ENCODE measurements at regions of chr17 and their contacts with region 1.

Region 1: GRCh38 chr17:65556014-65556909 is 5.2 kb downstream of the AXIN2 start:
- DNase-seq: peak; percentile 91
- H3K4me3 Mint-ChIP-seq: no peak overlapping the region
- H3K27ac Mint-ChIP-seq: no peak overlapping the region
- H3K4me1 Mint-ChIP-seq: peaks cover 27% of the 10 kb centered on the region
- H3K27me3 Mint-ChIP-seq: no peaks in the 10 kb centered on the region

Region 2: GRCh38 chr17:65294179-65294720 is 262.0 kb before region 1 on chr17:
- CTCF ChIA-PET with region 1: interaction called, 31 read pairs
- POLR2A ChIA-PET with region 1: no interaction called
- intact Hi-C with region 1: loop called (anchors 2 kb)
- DNase-seq: peak; percentile 71
- H3K4me3 Mint-ChIP-seq: no peak overlapping the region
- H3K27ac Mint-ChIP-seq: no peak overlapping the region
- H3K4me1 Mint-ChIP-seq: no peaks in the 10 kb centered on the region
- H3K27me3 Mint-ChIP-seq: no peaks in the 10 kb centered on the region

Region 3: GRCh38 chr17:65523853-65524664 is 32.2 kb before region 1 on chr17:
- CTCF ChIA-PET with region 1: interaction called, 9 read pairs
- POLR2A ChIA-PET with region 1: interaction called, 3 read pairs
- intact Hi-C with region 1: loop called (anchors 1 kb)
- DNase-seq: peak; percentile 10
- H3K4me3 Mint-ChIP-seq: no peak overlapping the region
- H3K27ac Mint-ChIP-seq: peak overlapping the region; percentile 57
- H3K4me1 Mint-ChIP-seq: peaks cover 24% of the 10 kb centered on the region
- H3K27me3 Mint-ChIP-seq: no peaks in the 10 kb centered on the region

Region 4: DNA sequence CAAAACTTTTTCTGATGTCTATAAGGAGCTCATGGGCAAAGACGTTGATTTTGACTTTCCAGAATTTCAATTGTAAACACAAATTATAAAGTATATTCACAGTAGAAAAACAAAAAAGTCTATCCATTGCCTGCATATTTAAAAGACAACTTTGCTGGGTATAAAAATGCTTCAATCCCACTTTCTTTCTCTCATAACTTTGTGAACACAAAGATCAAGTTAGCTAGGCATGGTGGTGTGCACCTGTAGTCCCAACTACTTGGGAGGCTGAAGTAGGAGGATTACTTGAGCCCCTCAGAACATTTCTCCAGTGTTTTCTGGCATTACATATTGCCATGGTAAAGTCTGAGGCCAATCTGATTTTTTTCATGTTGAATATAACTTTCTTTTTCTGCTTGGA is 88.3 kb after region 1 on chr17:
- CTCF ChIA-PET with region 1: no interaction called
- POLR2A ChIA-PET with region 1: no interaction called
- intact Hi-C with region 1: no loop called
- DNase-seq: no peak
- H3K4me3 Mint-ChIP-seq: no peak overlapping the region
- H3K27ac Mint-ChIP-seq: no peak overlapping the region
- H3K4me1 Mint-ChIP-seq: no peaks in the 10 kb centered on the region
- H3K27me3 Mint-ChIP-seq: no peaks in the 10 kb centered on the region

Region 5: DNA sequence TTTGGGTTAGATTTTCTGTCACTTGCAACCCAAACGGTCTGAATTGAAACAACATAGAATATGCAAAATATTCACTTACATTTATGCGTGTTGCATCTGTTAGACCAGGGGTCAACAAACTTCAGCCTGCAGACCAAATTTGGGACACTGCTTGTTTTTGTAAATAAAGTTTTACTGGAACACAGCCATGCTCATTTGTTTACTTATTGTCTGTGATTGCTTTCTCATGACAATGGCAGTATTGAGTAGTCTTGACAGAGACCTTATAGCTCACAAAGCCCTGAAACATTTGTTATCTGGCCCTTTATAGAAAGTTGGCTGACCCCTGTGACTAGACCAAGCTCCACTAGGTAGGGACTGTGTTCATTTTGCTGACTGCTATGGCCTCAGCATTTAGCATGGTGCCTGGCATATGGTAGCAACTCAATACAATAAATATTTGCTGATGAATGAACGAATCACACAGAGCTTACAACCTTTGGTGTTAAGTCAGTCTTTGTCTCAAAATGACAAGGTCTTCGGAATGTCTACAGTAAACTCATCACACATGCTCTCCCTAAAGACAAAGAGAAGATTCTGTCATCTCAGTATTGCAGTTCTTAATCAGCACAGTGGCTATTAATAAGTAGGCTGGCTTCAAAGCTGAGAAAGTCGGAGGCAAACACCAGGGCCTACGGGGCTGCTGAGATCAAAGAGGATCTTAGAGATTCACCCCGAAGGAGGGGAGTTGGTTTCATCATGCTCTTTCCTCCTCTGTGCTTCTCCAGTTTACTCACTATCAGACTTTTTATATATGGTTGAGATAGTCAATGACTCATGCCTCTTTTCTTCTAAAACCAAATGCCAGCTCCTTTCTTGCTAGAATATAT is 100.4 kb after region 1 on chr17:
- CTCF ChIA-PET with region 1: interaction called, 3 read pairs
- POLR2A ChIA-PET with region 1: no interaction called
- intact Hi-C with region 1: loop called (anchors 1 kb)
- DNase-seq: peak; percentile 80
- H3K4me3 Mint-ChIP-seq: no peak overlapping the region
- H3K27ac Mint-ChIP-seq: no peak overlapping the region
- H3K4me1 Mint-ChIP-seq: peaks cover 38% of the 10 kb centered on the region
- H3K27me3 Mint-ChIP-seq: no peaks in the 10 kb centered on the region

Region 6: DNA sequence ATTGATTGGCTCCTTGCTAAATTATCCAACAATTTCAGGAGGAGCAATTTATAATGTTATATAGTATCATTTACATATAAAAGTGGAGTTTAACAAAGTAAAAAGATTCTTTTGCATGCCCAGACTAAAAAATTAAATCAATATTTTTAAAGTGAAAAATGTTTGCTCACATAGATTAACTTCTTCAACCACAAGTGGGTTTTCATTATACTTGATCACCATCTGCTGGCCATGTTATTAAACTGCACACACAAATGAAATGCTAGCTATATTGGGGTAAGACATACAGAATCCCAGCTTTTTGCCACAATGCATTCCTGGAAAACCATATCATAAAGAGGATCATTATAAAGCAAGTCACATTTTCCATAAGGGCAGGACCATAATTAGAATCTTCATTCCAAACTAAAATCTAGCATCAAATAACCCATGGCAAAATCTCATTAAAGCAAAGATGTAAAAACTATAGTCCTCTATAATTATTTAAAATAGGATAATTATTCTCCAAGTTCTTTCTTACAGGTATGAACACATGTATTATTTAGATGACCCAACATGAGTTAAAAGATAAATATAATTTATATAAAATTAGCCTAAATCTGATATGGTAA is 609.4 kb after region 1 on chr17:
- CTCF ChIA-PET with region 1: interaction called, 8 read pairs
- POLR2A ChIA-PET with region 1: no interaction called
- intact Hi-C with region 1: loop called (anchors 10 kb)
- DNase-seq: no peak
- H3K4me3 Mint-ChIP-seq: no peak overlapping the region
- H3K27ac Mint-ChIP-seq: no peak overlapping the region
- H3K4me1 Mint-ChIP-seq: peaks cover 12% of the 10 kb centered on the region
- H3K27me3 Mint-ChIP-seq: no peaks in the 10 kb centered on the region